ENCODE measurements at regions of chr17 and their contacts with region 1.

Region 1: DNA sequence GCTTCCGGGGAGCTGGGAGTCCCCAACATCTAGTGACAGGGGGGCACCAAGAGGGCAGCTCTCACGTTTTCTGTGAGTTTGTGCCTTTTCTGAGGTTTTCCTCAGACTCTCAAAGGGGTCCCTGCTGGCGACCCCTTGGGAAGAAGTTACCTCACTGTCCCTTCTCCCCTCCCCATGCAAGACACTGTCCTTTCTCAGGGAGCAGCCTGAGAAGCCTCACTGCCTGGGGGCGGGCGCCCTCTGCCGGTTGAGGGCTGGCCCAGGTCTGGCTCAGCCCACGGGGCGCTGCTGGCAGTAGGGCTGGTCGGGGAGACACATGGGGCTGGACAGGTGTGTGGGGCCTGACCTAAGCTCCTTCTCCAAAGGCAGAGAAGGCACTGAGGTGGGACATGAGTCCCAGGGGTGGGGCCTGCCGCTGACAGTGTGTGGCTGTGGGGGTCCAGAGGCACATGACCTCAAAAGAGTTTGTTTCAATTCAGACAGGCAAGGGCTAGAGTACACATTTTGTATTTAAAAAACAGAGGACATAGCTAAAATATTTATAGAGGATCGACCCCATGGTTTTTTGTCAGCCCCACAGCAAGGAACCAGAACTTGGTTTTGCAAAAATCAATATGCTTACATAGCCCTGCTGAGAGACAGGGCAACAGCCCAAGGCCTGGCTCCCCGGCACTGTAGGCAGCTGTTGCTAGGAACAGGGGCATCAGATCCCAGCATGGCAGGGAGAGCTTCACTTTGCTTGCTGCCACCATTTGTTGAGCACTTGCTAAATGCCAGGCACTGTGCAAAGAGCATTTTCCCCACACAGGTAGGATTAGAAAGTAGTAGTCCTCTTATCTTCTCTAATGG is 18.5 kb upstream of the ALDH3A1 start:
- DNase-seq: peak; percentile 85
- H3K4me3 ChIP-seq: no peak overlapping the region
- H3K27ac ChIP-seq: no peak overlapping the region
- H3K4me1 ChIP-seq: no peaks in the 10 kb centered on the region
- H3K27me3 ChIP-seq: no peaks in the 10 kb centered on the region
- CTCF ChIP-seq: peak; percentile 92

Region 2: DNA sequence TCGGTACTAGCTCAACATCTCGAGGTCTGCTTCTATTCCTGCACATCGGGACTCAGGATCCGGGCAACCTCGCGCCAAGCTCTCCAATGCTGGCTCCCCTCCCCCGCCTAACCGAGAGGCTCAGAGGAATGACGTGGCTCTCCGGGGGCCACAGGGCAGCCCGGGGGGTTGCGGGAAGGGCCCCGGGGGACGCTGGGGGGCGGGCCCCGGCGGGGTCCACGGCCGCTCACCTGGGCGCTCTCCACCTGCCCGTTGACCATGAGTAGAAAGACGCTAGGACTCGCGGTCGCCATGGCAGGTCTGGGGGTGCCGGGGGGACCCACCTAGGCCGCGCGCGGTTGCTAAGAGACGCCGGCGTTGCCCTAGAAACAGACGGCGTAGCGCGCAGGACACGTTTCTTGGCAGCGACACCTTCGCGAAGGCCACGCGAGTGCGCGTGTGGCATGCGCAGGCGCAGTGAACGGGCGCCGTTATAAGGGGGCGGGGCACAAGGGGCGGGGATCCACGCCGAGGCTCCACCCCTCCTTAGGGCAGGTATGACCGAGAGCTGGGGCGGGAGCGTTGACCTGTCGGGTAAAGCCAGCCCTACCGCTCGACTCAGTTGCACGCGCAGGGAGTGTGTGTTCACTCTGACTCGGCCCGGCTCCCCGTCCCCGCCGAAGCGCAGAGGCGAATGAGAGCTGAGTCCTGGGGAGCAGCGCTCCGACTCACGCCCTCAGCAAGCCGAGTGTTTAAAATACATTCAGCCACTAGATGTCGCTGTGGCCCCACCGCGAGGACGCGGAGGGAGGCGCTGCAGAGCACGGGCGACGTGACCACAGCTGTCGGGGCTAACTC is 404.2 kb before region 1 on chr17 and contains the start of gene B9D1:
- intact Hi-C with region 1: loop called (anchors 10 kb)
- DNase-seq: peak; percentile 95
- H3K4me3 ChIP-seq: peak within 1 kb of the TSS; percentile 58
- H3K27ac ChIP-seq: peak within 1 kb of the TSS; percentile 66
- H3K4me1 ChIP-seq: no peaks in the 10 kb centered on the region
- H3K27me3 ChIP-seq: no peaks in the 10 kb centered on the region
- CTCF ChIP-seq: peak; percentile 87
- total RNA-seq, gene B9D1: 5.6 to 11.9 TPM

Region 3: GRCh38 chr17:19513897-19514488 is 252.7 kb before region 1 on chr17:
- intact Hi-C with region 1: loop called (anchors 2 kb)
- DNase-seq: peak; percentile 73
- H3K4me3 ChIP-seq: no peak overlapping the region
- H3K27ac ChIP-seq: no peak overlapping the region
- H3K4me1 ChIP-seq: no peaks in the 10 kb centered on the region
- H3K27me3 ChIP-seq: no peaks in the 10 kb centered on the region
- CTCF ChIP-seq: peak; percentile 76

Region 4: DNA sequence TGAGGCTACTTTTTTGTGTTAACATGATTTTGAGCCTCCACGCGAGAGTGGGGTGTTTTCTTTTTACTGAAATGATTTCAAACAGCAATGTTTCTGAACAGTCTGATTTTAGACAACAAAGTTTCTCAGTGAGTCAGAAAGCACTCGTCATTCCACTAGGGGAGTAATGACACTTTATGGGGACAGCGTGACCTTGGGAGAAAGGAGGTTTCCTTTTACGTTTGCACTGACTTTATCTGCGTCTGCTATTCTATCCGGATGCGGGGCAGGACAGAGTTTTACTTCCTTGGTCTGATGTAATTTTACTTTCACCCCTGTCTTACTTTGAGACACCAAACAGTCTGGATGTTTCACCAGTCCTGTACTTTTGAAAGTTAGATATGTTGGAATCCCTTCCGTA is 212.3 kb before region 1 on chr17:
- intact Hi-C with region 1: no loop called
- DNase-seq: no peak
- H3K4me3 ChIP-seq: no peak overlapping the region
- H3K27ac ChIP-seq: no peak overlapping the region
- H3K4me1 ChIP-seq: no peaks in the 10 kb centered on the region
- H3K27me3 ChIP-seq: no peaks in the 10 kb centered on the region
- CTCF ChIP-seq: no peak

Region 5: GRCh38 chr17:19648475-19649406 is 117.9 kb before region 1 on chr17 and contains the start of gene ALDH3A2:
- intact Hi-C with region 1: no loop called
- DNase-seq: peak; percentile 99
- H3K4me3 ChIP-seq: peak within 1 kb of the TSS; percentile 72
- H3K27ac ChIP-seq: peak within 1 kb of the TSS; percentile 87
- H3K4me1 ChIP-seq: peaks cover 13% of the 10 kb centered on the region
- H3K27me3 ChIP-seq: no peaks in the 10 kb centered on the region
- CTCF ChIP-seq: no peak
- total RNA-seq, gene ALDH3A2: 115 to 144 TPM

Region 6: GRCh38 chr17:19673623-19674022 is 93.0 kb before region 1 on chr17:
- intact Hi-C with region 1: no loop called
- DNase-seq: no peak
- H3K4me3 ChIP-seq: no peak overlapping the region
- H3K27ac ChIP-seq: no peak overlapping the region
- H3K4me1 ChIP-seq: no peaks in the 10 kb centered on the region
- H3K27me3 ChIP-seq: no peaks in the 10 kb centered on the region
- CTCF ChIP-seq: no peak

Region 7: GRCh38 chr17:19728079-19728495 is 38.6 kb before region 1 on chr17:
- intact Hi-C with region 1: no loop called
- DNase-seq: peak; percentile 80
- H3K4me3 ChIP-seq: no peak overlapping the region
- H3K27ac ChIP-seq: peak overlapping the region; percentile 57
- H3K4me1 ChIP-seq: peaks cover 9% of the 10 kb centered on the region
- H3K27me3 ChIP-seq: no peaks in the 10 kb centered on the region
- CTCF ChIP-seq: no peak